H1 (cell line): ENCODE measurements at regions of chr7 and their contacts with region 1.

Region 1: GRCh38 chr7:82572195-82572880 is 128.8 kb upstream of the CACNA2D1 start:
- DNase-seq: peak; percentile 62 to 93
- H3K4me3 ChIP-seq: no peak overlapping the region
- H3K27ac ChIP-seq: no peak overlapping the region
- H3K4me1 ChIP-seq: no peaks in the 10 kb centered on the region
- H3K27me3 ChIP-seq: peaks cover 0 to 1% (median 0%) of the 10 kb centered on the region in 4 experiments; a peak in 1 of 7 replicates
- CTCF ChIP-seq: peak; percentile 63 to 94 (median 88)
- EP300 ChIP-seq: no peak
- POLR2A ChIP-seq: no peak
- RAD21 ChIP-seq: peak; percentile 99 to 100

Region 2: DNA sequence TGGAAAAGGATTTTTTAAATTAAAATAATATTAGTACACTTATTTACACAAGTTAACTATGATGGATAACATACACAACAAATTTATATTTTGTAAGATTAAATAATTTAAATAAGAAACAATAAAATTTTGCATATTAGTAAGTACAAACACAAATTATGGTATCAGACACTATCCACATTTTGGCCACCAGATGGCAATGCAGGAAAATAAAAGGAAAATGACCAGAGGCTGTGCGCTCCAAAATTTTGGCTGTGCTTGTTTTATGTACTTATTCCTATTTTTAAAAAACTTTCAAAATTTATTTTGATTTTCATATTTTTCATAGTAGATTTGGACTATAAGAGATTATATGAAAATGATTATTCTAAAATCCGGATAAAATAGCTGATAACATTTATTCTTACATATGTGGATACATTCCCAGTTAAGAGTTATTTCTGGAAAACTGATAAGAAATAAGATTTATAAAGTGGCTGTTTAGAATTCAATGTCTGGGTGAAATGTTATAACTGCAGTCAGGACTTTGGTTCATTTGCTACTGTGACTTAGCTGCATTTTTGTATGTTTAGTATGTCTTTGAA is 527.7 kb before region 1 on chr7:
- CTCF ChIA-PET with region 1: interaction called, 14 read pairs
- POLR2A ChIA-PET with region 1: no interaction called
- DNase-seq: no peak
- H3K4me3 ChIP-seq: no peak overlapping the region
- H3K27ac ChIP-seq: no peak overlapping the region
- H3K4me1 ChIP-seq: no peaks in the 10 kb centered on the region
- H3K27me3 ChIP-seq: no peaks in the 10 kb centered on the region
- CTCF ChIP-seq: peak in 2 of 3 experiments; percentile 31 to 47; a peak in 2 of 4 replicates
- EP300 ChIP-seq: no peak
- POLR2A ChIP-seq: no peak
- RAD21 ChIP-seq: peak; percentile 79 to 81

Region 3: DNA sequence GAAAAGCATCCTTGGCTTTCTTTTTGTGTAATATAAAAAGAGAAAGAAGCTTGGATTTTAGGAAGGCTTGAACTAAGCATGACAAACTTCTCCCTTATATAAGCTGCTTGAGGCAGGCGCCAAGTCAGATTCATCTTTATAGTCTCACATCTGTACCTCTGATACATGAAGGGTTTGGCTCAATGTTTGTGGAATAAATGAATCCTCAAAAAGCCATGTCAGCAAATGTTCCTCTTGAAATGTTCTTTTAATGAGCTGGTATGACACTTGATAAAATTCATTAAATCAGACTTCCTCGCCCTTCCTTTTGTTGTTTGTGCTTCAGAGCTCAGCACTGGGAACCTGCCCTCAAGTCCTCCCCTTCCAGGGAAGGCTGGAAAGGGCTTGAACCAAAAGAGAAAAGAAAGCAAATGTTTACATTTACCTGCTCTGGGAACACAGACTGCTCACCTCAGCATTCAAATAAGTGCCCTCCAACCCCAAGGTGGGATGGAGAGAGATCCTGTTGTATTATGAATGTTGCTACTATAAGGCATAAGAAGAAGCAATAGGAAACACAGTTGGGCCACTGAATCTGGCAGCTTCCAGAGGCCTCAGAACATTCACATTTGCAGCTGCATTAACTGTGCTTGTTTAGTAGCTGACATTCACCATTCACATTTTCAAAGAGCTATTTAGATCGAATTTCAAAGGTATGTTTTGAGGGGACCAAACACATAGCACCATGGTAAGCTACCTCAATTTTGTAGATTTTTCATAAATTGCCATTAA is 341.3 kb before region 1 on chr7:
- CTCF ChIA-PET with region 1: interaction called, 16 read pairs
- POLR2A ChIA-PET with region 1: no interaction called
- DNase-seq: no peak
- H3K4me3 ChIP-seq: no peak overlapping the region
- H3K27ac ChIP-seq: no peak overlapping the region
- H3K4me1 ChIP-seq: peaks cover 0 to 7% (median 4%) of the 10 kb centered on the region in 4 experiments; a peak in 3 of 7 replicates
- H3K27me3 ChIP-seq: no peaks in the 10 kb centered on the region
- CTCF ChIP-seq: no peak
- EP300 ChIP-seq: no peak
- POLR2A ChIP-seq: no peak
- RAD21 ChIP-seq: no peak

Region 4: DNA sequence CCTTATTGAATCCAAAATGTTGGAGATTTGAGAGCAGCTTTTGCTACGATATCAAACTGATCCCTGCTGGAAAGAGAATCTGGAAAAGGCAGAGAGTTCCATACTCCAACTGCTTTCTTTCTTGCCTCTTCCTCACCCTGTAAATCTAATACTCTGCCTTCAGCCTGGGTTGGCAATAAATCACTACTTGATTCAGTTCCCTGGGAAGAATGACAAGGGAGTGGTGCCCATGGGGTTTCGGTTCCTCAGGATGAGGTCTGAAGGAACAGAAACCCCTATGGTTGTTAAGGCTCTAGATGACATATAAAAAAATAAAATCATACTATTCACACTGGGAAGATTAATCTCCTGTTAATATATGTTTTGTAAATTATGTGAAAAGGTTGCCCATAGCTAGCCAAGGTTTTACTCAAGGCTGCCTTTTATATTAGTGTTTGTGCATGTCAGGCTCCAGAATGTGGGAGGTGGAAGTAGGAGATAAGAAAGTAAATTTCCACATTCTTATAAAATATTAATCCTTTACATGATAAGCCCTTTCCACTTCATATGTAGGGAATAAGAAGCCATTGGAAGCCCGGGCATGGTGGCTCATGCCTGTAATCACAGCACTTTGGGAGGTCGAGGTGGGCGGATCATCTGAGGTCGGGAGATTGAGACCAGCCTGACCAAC is 22.6 kb before region 1 on chr7:
- CTCF ChIA-PET with region 1: no interaction called
- POLR2A ChIA-PET with region 1: no interaction called
- DNase-seq: no peak
- H3K4me3 ChIP-seq: no peak overlapping the region
- H3K27ac ChIP-seq: no peak overlapping the region
- H3K4me1 ChIP-seq: no peaks in the 10 kb centered on the region
- H3K27me3 ChIP-seq: no peaks in the 10 kb centered on the region
- CTCF ChIP-seq: no peak
- EP300 ChIP-seq: no peak
- POLR2A ChIP-seq: no peak
- RAD21 ChIP-seq: no peak